Activated B cell treated with CpG ODN at 0.5 μM for 24 hours (primary cell): ENCODE measurements at regions of chr2 and their contacts with region 1.

Region 1: GRCh38 chr2:108583903-108584520 is 49.7 kb downstream of the LIMS1 start:
- DNase-seq: no peak
- ATAC-seq: peak; percentile 72
- H3K4me3 Mint-ChIP-seq: no peak overlapping the region
- H3K27ac Mint-ChIP-seq: peak overlapping the region; percentile 51
- H3K4me1 Mint-ChIP-seq: peaks cover 60% of the 10 kb centered on the region
- H3K27me3 Mint-ChIP-seq: no peaks in the 10 kb centered on the region
- CTCF ChIP-seq: no peak

Region 2: DNA sequence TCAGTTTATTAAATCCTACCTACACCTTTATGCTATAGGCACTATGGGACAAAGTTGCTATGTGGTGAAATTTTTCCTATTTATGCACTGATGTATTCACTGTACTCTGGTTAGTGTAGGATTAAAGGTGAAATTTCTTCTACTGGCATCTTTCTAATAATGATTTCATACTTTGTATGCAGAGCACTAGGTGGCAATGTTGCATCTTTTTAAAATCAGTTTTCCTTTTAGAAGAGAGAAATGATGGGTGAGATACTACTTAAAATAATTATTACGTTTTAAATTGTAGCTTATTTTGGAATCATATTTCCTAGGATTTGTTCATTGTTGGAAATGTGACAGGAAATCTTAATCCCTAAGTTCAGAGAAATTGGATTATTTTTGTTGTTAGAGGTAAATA is 1946.0 kb before region 1 on chr2:
- CTCF ChIA-PET with region 1: no interaction called
- POLR2A ChIA-PET with region 1: no interaction called
- intact Hi-C with region 1: loop called (anchors 10 kb)
- DNase-seq: no peak
- ATAC-seq: no peak
- H3K4me3 Mint-ChIP-seq: no peak overlapping the region
- H3K27ac Mint-ChIP-seq: no peak overlapping the region
- H3K4me1 Mint-ChIP-seq: no peaks in the 10 kb centered on the region
- H3K27me3 Mint-ChIP-seq: peaks cover 3% of the 10 kb centered on the region
- CTCF ChIP-seq: no peak

Region 3: GRCh38 chr2:107992069-107992468 is 591.9 kb before region 1 on chr2:
- CTCF ChIA-PET with region 1: no interaction called
- POLR2A ChIA-PET with region 1: no interaction called
- intact Hi-C with region 1: no loop called
- DNase-seq: no peak
- ATAC-seq: no peak
- H3K4me3 Mint-ChIP-seq: no peak overlapping the region
- H3K27ac Mint-ChIP-seq: no peak overlapping the region
- H3K4me1 Mint-ChIP-seq: no peaks in the 10 kb centered on the region
- H3K27me3 Mint-ChIP-seq: peaks cover 7% of the 10 kb centered on the region
- CTCF ChIP-seq: no peak

Region 4: DNA sequence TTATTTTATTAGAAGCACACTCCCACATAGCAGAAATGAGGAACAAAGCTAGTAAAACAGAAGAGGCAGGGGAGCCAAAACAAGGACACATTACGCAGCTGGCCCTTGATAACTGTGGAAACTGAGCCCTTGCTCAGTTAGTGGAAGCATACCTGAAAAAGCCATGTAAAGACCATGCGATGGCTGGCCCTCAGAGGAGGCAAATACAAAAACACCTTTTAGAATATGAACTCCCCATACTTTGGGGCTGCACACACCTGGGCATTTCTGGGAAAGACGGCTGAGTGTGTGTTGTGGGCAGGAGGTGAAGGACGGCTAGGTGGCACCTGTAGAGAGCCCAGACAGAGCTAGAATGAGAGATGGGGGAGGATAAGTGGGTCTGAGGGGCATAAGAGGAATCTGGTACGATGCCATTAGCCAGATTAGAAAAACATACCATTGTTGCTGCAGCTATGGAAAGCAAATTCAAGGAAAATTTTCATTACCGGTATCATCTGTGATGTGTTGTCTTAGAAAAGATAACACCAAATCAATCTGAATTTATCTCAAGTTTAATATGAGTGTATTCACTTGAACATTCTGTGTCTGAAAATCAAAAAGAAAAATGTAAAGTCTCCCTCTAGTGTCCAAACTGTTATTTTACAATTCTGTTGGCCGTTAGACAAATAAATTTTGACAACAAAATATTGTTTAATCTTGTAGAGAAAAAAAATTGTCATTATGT is 389.4 kb before region 1 on chr2:
- CTCF ChIA-PET with region 1: no interaction called
- POLR2A ChIA-PET with region 1: no interaction called
- intact Hi-C with region 1: loop called (anchors 5 kb)
- DNase-seq: no peak
- ATAC-seq: no peak
- H3K4me3 Mint-ChIP-seq: no peak overlapping the region
- H3K27ac Mint-ChIP-seq: no peak overlapping the region
- H3K4me1 Mint-ChIP-seq: no peaks in the 10 kb centered on the region
- H3K27me3 Mint-ChIP-seq: peaks cover 2% of the 10 kb centered on the region
- CTCF ChIP-seq: no peak

Region 5: GRCh38 chr2:108396845-108397244 is 187.2 kb before region 1 on chr2:
- CTCF ChIA-PET with region 1: no interaction called
- POLR2A ChIA-PET with region 1: no interaction called
- intact Hi-C with region 1: loop called (anchors 1 kb)
- DNase-seq: no peak
- ATAC-seq: no peak
- H3K4me3 Mint-ChIP-seq: no peak overlapping the region
- H3K27ac Mint-ChIP-seq: no peak overlapping the region
- H3K4me1 Mint-ChIP-seq: no peaks in the 10 kb centered on the region
- H3K27me3 Mint-ChIP-seq: no peaks in the 10 kb centered on the region
- CTCF ChIP-seq: no peak

Region 6: DNA sequence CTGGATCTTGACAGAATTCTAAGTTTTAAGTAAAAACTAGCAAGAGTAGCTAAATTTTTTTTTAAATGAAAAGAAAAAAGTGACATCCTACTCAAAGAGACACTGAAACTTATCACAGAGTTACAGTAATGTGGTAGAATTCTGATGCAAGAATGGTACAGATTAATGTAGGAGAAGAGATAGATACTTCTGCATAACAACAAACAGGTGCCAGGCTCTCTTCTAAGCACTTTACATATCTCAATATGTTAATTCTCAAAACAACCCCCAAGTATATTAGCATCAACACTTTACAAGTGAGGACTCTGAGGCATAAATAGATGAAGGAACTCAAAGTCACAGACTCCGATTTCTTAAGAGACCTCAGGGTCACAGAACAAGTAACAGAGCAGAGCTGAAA is 106.9 kb before region 1 on chr2:
- CTCF ChIA-PET with region 1: no interaction called
- POLR2A ChIA-PET with region 1: no interaction called
- intact Hi-C with region 1: no loop called
- DNase-seq: no peak
- ATAC-seq: no peak
- H3K4me3 Mint-ChIP-seq: no peak overlapping the region
- H3K27ac Mint-ChIP-seq: no peak overlapping the region
- H3K4me1 Mint-ChIP-seq: no peaks in the 10 kb centered on the region
- H3K27me3 Mint-ChIP-seq: no peaks in the 10 kb centered on the region
- CTCF ChIP-seq: no peak

Region 7: GRCh38 chr2:108492364-108492763 is 91.6 kb before region 1 on chr2:
- CTCF ChIA-PET with region 1: no interaction called
- POLR2A ChIA-PET with region 1: no interaction called
- intact Hi-C with region 1: loop called (anchors 5 kb)
- DNase-seq: no peak
- ATAC-seq: no peak
- H3K4me3 Mint-ChIP-seq: no peak overlapping the region
- H3K27ac Mint-ChIP-seq: no peak overlapping the region
- H3K4me1 Mint-ChIP-seq: no peaks in the 10 kb centered on the region
- H3K27me3 Mint-ChIP-seq: no peaks in the 10 kb centered on the region
- CTCF ChIP-seq: no peak

Region 8: GRCh38 chr2:108594132-108594981 is 10.3 kb after region 1 on chr2:
- CTCF ChIA-PET with region 1: interaction called, 14 read pairs
- POLR2A ChIA-PET with region 1: no interaction called
- intact Hi-C with region 1: no loop called
- DNase-seq: no peak
- ATAC-seq: peak; percentile 75
- H3K4me3 Mint-ChIP-seq: peak overlapping the region; percentile 64
- H3K27ac Mint-ChIP-seq: peak overlapping the region; percentile 83
- H3K4me1 Mint-ChIP-seq: peaks cover 78% of the 10 kb centered on the region
- H3K27me3 Mint-ChIP-seq: no peaks in the 10 kb centered on the region
- CTCF ChIP-seq: no peak

Region 9: GRCh38 chr2:108637304-108637669 is 53.3 kb after region 1 on chr2:
- CTCF ChIA-PET with region 1: interaction called, 23 read pairs
- POLR2A ChIA-PET with region 1: no interaction called
- intact Hi-C with region 1: no loop called
- DNase-seq: no peak
- ATAC-seq: no peak
- H3K4me3 Mint-ChIP-seq: no peak overlapping the region
- H3K27ac Mint-ChIP-seq: no peak overlapping the region
- H3K4me1 Mint-ChIP-seq: peaks cover 31% of the 10 kb centered on the region
- H3K27me3 Mint-ChIP-seq: no peaks in the 10 kb centered on the region
- CTCF ChIP-seq: no peak

Region 10: DNA sequence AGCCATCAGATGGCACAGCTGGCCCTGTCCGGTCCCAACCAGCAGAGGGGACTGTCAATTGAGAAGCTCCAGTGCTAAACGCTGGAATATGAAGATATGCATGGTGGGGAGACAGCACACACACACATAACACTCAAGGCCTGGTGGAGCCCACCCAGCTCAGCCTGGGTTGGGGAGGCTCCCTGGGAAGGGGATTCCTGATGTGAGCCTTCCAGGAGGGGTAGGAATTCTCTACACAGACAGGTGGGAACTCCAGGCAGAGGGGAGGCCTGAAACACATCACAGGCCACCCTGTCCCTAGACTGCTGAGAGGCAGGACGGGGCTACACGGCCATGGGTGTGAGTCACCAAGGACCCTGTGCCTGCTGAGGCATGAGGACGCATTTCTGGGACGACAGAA is 495.6 kb after region 1 on chr2:
- CTCF ChIA-PET with region 1: no interaction called
- POLR2A ChIA-PET with region 1: no interaction called
- intact Hi-C with region 1: no loop called
- DNase-seq: no peak
- ATAC-seq: no peak
- H3K4me3 Mint-ChIP-seq: no peak overlapping the region
- H3K27ac Mint-ChIP-seq: no peak overlapping the region
- H3K4me1 Mint-ChIP-seq: no peaks in the 10 kb centered on the region
- H3K27me3 Mint-ChIP-seq: no peaks in the 10 kb centered on the region
- CTCF ChIP-seq: no peak

Region 11: DNA sequence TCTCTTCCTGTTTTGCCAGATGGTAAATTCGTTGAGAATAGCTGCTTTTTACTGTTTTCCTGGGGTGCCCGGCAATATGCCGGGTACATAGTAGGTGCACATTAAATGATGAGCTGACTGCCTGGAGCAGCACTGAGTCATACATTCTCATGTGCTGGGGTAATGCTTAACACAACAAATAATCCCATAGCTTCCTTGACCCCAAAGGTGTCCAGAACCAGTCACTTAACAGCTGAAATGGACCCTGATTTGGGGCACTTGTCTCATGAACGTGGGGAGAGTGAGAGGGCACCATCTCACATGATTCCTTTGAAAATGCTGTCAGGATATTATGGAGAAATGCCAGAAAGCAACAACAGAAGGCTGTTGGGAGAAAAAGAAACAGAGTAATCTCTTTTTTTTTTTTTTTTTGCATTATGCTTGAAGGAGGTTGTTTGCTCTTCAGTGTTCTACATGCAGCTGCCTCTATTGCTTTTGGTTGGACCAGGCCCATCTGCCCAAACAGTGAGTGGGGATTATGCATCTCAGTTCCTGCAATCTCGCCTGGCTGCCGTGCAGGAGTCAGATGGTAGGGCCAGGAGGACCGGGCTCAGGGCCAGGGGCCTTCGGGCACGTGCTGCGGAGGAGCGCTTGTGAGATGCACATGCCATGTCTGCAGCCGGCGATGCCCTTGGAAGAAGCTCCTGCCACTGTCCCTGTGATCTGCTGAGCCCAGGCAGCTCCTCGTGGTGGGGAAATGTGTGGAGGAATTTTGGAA is 707.1 kb after region 1 on chr2:
- CTCF ChIA-PET with region 1: no interaction called
- POLR2A ChIA-PET with region 1: no interaction called
- intact Hi-C with region 1: no loop called
- DNase-seq: no peak
- ATAC-seq: no peak
- H3K4me3 Mint-ChIP-seq: no peak overlapping the region
- H3K27ac Mint-ChIP-seq: no peak overlapping the region
- H3K4me1 Mint-ChIP-seq: no peaks in the 10 kb centered on the region
- H3K27me3 Mint-ChIP-seq: no peaks in the 10 kb centered on the region
- CTCF ChIP-seq: no peak